HepG2 (cell line): ENCODE measurements at regions of chr3 and their contacts with region 1.

Region 1: GRCh38 chr3:19866751-19867347 is 67.2 kb downstream of the EFHB start:
- DNase-seq: peak; percentile 38
- ATAC-seq: peak; percentile 87
- H3K4me3 ChIP-seq: no peak overlapping the region
- H3K27ac ChIP-seq: no peak overlapping the region
- H3K4me1 ChIP-seq: no peaks in the 10 kb centered on the region
- H3K27me3 ChIP-seq: no peaks in the 10 kb centered on the region
- CTCF ChIP-seq: peak; percentile 83
- EP300 ChIP-seq: no peak
- POLR2A ChIP-seq: no peak
- RAD21 ChIP-seq: peak; percentile 45; the same call in 1 of the 2 replicates

Region 2: DNA sequence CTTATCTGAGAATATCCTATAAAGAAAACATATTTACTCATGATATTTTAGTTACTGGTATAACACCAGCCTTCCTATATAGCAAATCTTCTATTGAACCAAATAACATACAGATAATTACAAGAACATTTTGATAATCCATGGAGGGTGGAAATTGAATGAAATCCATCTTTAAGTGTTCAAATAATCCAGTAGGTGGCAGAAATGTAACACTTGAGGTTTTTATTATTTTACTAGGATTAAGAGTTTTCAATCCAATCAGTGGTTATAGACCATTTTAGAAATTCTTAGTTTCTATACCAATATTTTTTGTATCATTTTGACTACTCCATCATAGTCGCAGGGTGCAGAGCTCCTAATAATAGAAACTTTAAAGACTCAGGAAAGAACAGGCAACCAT is 820.4 kb before region 1 on chr3:
- CTCF ChIA-PET with region 1: no interaction called
- POLR2A ChIA-PET with region 1: no interaction called
- in situ Hi-C with region 1: no loop called
- intact Hi-C with region 1: loop called (anchors 1 kb)
- DNase-seq: no peak
- ATAC-seq: no peak
- H3K4me3 ChIP-seq: no peak overlapping the region
- H3K27ac ChIP-seq: no peak overlapping the region
- H3K4me1 ChIP-seq: no peaks in the 10 kb centered on the region
- H3K27me3 ChIP-seq: no peaks in the 10 kb centered on the region
- CTCF ChIP-seq: 0 out of 2 replicates have a peak, but pooled peaks have one; percentile 8
- EP300 ChIP-seq: no peak
- POLR2A ChIP-seq: no peak
- RAD21 ChIP-seq: no peak

Region 3: DNA sequence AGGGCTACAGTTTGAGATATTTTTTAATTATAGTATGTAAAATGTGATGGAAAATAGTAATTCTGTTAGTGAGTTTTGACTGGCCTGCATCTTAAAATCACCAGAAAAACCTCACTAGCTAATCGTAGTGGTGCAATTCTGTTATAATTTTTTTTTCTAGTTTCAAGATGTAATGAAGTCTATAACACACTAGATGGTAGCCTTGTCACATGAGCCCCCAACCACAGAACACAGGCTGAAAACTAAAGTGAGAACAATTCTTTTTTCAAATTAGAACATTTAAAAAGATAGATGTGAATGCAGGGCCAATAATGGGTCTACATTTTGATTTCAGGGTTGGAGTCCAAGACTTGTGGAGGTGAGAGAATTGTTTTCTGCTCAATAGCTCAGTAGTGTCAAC is 801.8 kb before region 1 on chr3:
- CTCF ChIA-PET with region 1: no interaction called
- POLR2A ChIA-PET with region 1: no interaction called
- in situ Hi-C with region 1: loop called (anchors 10 kb)
- intact Hi-C with region 1: no loop called
- DNase-seq: peak; percentile 10
- ATAC-seq: no peak
- H3K4me3 ChIP-seq: no peak overlapping the region
- H3K27ac ChIP-seq: no peak overlapping the region
- H3K4me1 ChIP-seq: no peaks in the 10 kb centered on the region
- H3K27me3 ChIP-seq: no peaks in the 10 kb centered on the region
- CTCF ChIP-seq: peak; percentile 58
- EP300 ChIP-seq: no peak
- POLR2A ChIP-seq: no peak
- RAD21 ChIP-seq: peak; percentile 41; the same call in 1 of the 2 replicates

Region 4: GRCh38 chr3:19348929-19349564 is 517.8 kb before region 1 on chr3:
- CTCF ChIA-PET with region 1: interaction called, 18 read pairs
- POLR2A ChIA-PET with region 1: no interaction called
- in situ Hi-C with region 1: loop called (anchors 10 kb)
- intact Hi-C with region 1: no loop called
- DNase-seq: peak; percentile 8
- ATAC-seq: peak; percentile 71
- H3K4me3 ChIP-seq: no peak overlapping the region
- H3K27ac ChIP-seq: no peak overlapping the region
- H3K4me1 ChIP-seq: no peaks in the 10 kb centered on the region
- H3K27me3 ChIP-seq: no peaks in the 10 kb centered on the region
- CTCF ChIP-seq: peak; percentile 35
- EP300 ChIP-seq: no peak
- POLR2A ChIP-seq: no peak
- RAD21 ChIP-seq: no peak

Region 5: GRCh38 chr3:19907523-19907922 is 40.7 kb after region 1 on chr3:
- CTCF ChIA-PET with region 1: no interaction called
- POLR2A ChIA-PET with region 1: no interaction called
- in situ Hi-C with region 1: no loop called
- intact Hi-C with region 1: no loop called
- DNase-seq: no peak
- ATAC-seq: no peak
- H3K4me3 ChIP-seq: no peak overlapping the region
- H3K27ac ChIP-seq: no peak overlapping the region
- H3K4me1 ChIP-seq: no peaks in the 10 kb centered on the region
- H3K27me3 ChIP-seq: no peaks in the 10 kb centered on the region
- CTCF ChIP-seq: no peak
- EP300 ChIP-seq: no peak
- POLR2A ChIP-seq: no peak
- RAD21 ChIP-seq: no peak